ENCODE measurements at regions of chr12 and their contacts with region 1.

Region 1: DNA sequence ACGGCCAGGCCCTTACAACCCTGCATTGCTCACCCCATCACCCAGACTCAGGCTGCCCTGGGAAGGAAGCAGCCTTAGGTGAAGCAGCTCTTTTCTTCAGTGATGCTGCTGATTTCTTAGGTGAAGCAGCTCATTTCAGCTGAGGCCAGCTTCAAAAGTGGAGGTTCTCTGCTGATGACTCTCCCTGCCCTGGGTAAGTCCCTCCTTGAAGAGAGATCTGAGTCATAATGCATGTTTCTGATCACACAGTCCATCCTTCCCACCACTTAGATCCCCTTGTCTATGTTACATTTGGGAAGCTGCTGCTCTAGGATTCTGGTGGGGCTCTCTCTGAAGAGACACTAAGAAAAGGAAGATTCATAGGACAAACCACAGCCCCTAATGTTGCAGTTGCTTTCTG is 17.2 kb upstream of the ZNF140 start:
- DNase-seq: no peak
- H3K4me3 ChIP-seq: peak overlapping the region in 1 of 4 donors; percentile 7
- H3K27ac ChIP-seq: no peak overlapping the region
- H3K4me1 ChIP-seq: no peaks in the 10 kb centered on the region
- H3K27me3 ChIP-seq: no peaks in the 10 kb centered on the region
- CTCF ChIP-seq: no peak
- POLR2A ChIP-seq: no peak

Region 2: DNA sequence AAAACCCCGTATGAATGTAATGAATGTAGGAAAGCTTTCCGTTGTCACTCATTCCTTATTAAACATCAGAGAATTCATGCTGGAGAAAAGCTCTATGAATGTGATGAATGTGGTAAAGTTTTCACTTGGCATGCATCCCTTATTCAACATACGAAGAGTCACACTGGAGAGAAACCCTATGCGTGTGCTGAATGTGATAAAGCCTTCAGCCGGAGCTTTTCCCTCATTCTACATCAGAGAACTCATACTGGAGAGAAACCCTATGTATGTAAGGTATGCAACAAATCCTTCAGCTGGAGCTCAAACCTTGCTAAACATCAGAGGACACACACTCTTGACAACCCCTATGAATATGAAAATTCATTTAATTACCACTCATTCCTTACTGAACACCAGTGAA is 42.7 kb after region 1 on chr12:
- intact Hi-C with region 1: loop called (anchors 2 kb)
- DNase-seq: no peak
- H3K4me3 ChIP-seq: peak overlapping the region in 1 of 4 donors; percentile 29
- H3K27ac ChIP-seq: no peak overlapping the region
- H3K4me1 ChIP-seq: no peaks in the 10 kb centered on the region
- H3K27me3 ChIP-seq: no peaks in the 10 kb centered on the region
- CTCF ChIP-seq: no peak
- POLR2A ChIP-seq: no peak

Measured in esophagus squamous epithelium (tissue), 5 donors.